CD8-positive, alpha-beta T cell (primary cell): ENCODE measurements at regions of chr10 and their contacts with region 1.

Region 1: GRCh38 chr10:91974960-91975359 is 51.4 kb downstream of the BTAF1 start:
- DNase-seq: no peak
- ATAC-seq: no peak
- H3K4me3 ChIP-seq: no peak overlapping the region
- H3K4me3 Mint-ChIP-seq: no peak overlapping the region
- H3K27ac ChIP-seq: no peak overlapping the region
- H3K27ac Mint-ChIP-seq: no peak overlapping the region
- H3K4me1 ChIP-seq: no peaks in the 10 kb centered on the region
- H3K4me1 Mint-ChIP-seq: no peaks in the 10 kb centered on the region
- H3K27me3 ChIP-seq: no peaks in the 10 kb centered on the region
- H3K27me3 Mint-ChIP-seq: no peaks in the 10 kb centered on the region
- CTCF ChIP-seq: no peak

Region 2: DNA sequence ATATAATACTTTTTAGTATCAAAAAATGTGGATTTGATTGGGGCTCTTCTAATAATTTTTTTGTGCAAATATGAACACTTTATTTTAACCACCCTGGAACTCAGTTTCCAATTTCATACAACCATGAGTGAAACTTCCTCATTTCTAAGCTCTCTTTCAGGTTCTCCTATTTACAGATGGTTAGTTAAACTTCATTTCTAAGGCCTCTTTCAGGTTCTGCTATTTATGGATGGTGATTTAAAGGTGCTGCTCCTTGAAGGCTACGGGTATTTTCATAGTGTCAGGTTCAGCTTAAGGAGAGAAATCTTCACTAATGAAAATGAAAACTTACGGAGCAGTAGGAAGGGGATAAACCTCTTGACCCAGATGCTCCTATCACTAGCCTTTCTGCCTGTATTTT is 1705.3 kb before region 1 on chr10:
- CTCF ChIA-PET with region 1: no interaction called
- POLR2A ChIA-PET with region 1: no interaction called
- intact Hi-C with region 1: no loop called
- DNase-seq: no peak
- ATAC-seq: no peak
- H3K4me3 ChIP-seq: no peak overlapping the region
- H3K4me3 Mint-ChIP-seq: no peak overlapping the region
- H3K27ac ChIP-seq: no peak overlapping the region
- H3K27ac Mint-ChIP-seq: no peak overlapping the region
- H3K4me1 ChIP-seq: no peaks in the 10 kb centered on the region
- H3K4me1 Mint-ChIP-seq: no peaks in the 10 kb centered on the region
- H3K27me3 ChIP-seq: no peaks in the 10 kb centered on the region
- H3K27me3 Mint-ChIP-seq: no peaks in the 10 kb centered on the region
- CTCF ChIP-seq: no peak

Region 3: GRCh38 chr10:91932737-91933136 is 42.2 kb before region 1 on chr10:
- CTCF ChIA-PET with region 1: no interaction called
- POLR2A ChIA-PET with region 1: no interaction called
- intact Hi-C with region 1: no loop called
- DNase-seq: no peak
- ATAC-seq: no peak
- H3K4me3 ChIP-seq: no peak overlapping the region
- H3K4me3 Mint-ChIP-seq: no peak overlapping the region
- H3K27ac ChIP-seq: no peak overlapping the region
- H3K27ac Mint-ChIP-seq: no peak overlapping the region
- H3K4me1 ChIP-seq: peaks cover 30% of the 10 kb centered on the region
- H3K4me1 Mint-ChIP-seq: peaks cover 70% of the 10 kb centered on the region
- H3K27me3 ChIP-seq: no peaks in the 10 kb centered on the region
- H3K27me3 Mint-ChIP-seq: no peaks in the 10 kb centered on the region
- CTCF ChIP-seq: no peak

Region 4: DNA sequence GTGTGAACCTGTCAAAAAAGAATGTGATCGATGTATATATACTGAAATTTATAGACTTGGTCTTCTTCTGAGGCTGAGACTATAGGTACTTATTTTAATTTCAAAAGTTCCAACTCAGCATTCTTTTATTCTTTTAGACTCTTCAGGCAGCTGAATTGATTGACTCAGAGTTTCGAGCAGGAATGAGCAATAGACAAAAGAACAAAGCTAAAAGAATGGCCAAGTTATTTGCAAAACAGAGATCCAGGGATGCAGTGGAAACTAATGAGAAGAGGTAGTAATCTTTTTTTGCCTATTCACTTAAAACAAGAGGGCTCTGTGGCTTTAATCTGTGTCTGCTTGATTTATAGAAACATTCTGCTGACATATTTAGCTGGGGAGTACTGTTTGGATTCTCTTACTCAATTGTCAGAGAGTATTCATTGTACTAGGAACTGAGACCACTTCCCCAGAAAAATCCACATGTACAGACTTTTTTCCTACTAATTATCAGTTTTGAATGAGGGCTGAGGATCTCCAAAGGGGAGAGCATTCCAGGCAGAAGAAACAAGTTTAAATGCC is 21.3 kb before region 1 on chr10:
- CTCF ChIA-PET with region 1: no interaction called
- POLR2A ChIA-PET with region 1: no interaction called
- intact Hi-C with region 1: loop called in 1 of 2 experiments (anchors 1 kb)
- DNase-seq: no peak
- ATAC-seq: no peak
- H3K4me3 ChIP-seq: no peak overlapping the region
- H3K4me3 Mint-ChIP-seq: no peak overlapping the region
- H3K27ac ChIP-seq: no peak overlapping the region
- H3K27ac Mint-ChIP-seq: no peak overlapping the region
- H3K4me1 ChIP-seq: no peaks in the 10 kb centered on the region
- H3K4me1 Mint-ChIP-seq: peaks cover 2% of the 10 kb centered on the region
- H3K27me3 ChIP-seq: no peaks in the 10 kb centered on the region
- H3K27me3 Mint-ChIP-seq: no peaks in the 10 kb centered on the region
- CTCF ChIP-seq: no peak